ENCODE measurements at regions of chr11 and their contacts with region 1.

Region 1: GRCh38 chr11:63478896-63479295 is 12.1 kb downstream of the PLAAT5 start:
- DNase-seq: peak in 1 of 2 donors; percentile 18
- ATAC-seq: peak; percentile 89

Region 2: GRCh38 chr11:63621931-63622782 is 143.3 kb after region 1 on chr11:
- intact Hi-C with region 1: no loop called
- DNase-seq: no peak
- ATAC-seq: no peak

Region 3: GRCh38 chr11:63635762-63636465 is 157.0 kb after region 1 on chr11:
- intact Hi-C with region 1: loop called in 1 of 2 experiments (anchors 5 kb)
- DNase-seq: peak; percentile 41 to 55
- ATAC-seq: peak; percentile 88

Region 4: GRCh38 chr11:63738720-63739360 is 259.9 kb after region 1 on chr11:
- intact Hi-C with region 1: loop called in 1 of 2 experiments (anchors 5 kb)
- DNase-seq: peak; percentile 39 to 84
- ATAC-seq: peak; percentile 61